ENCODE measurements at regions of chr12 and their contacts with region 1.

Region 1: DNA sequence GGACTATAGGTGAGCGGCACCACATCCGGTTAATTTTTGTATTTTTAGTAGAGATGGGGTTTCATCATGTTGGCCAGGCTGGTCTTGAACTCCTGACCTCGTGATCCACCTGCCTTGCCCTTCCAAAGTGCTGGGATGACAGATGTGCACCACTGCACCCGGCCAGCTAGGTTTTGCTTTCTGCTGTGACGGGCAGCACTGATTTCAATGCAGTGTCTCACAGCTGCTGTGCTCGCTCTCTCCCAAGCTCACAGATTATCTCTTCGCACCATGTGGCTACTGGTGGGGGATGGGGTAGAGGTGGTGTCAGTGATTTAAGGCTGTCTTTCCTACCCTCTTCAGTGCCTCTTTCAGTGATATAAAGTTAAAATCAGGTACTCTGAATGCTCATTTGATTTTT is 909.1 kb downstream of the TRHDE start:
- DNase-seq: no peak
- H3K4me3 ChIP-seq: no peak overlapping the region
- H3K27ac ChIP-seq: no peak overlapping the region
- H3K4me1 ChIP-seq: no peaks in the 10 kb centered on the region
- CTCF ChIP-seq: no peak

Region 2: DNA sequence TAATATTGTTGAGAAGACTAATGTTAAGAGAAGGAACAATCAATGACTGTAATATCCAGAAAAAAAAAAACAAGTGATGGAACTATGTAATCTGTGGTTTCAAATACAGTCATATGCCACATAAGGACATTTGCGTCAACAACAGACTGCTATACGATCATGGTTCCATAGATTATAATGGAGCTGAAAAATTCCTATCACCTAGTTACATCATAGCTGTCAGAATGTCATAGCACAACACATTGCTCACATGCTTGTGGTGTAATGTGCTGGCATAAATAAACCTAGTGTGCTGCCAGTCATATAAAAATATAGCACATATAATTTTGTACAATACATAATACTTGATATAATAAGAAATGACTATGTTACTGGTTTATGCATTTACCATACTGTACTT is 255.5 kb before region 1 on chr12:
- CTCF ChIA-PET with region 1: no interaction called
- POLR2A ChIA-PET with region 1: no interaction called
- intact Hi-C with region 1: no loop called
- DNase-seq: no peak
- H3K4me3 ChIP-seq: no peak overlapping the region
- H3K27ac ChIP-seq: no peak overlapping the region
- H3K4me1 ChIP-seq: no peaks in the 10 kb centered on the region
- CTCF ChIP-seq: no peak

Region 3: DNA sequence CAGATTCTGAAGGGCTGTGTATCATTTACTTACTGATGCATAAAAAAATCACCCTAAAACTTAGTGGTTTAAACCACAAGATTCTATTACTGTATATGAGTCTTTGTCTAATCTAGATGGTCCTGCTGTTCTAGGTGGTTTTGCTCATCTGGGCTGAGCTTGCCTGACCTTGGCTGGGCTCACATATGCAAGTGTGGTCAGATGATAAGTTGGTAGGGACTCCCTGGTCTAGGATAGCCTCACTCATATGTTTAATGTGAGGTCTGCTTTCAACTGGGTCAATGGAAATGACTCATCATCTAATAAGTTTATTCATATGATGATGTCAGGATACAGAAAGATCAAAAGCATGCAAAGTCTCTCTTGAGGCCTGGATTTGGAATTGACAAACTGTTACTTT is 21.3 kb before region 1 on chr12:
- CTCF ChIA-PET with region 1: no interaction called
- POLR2A ChIA-PET with region 1: interaction called, 11 read pairs
- intact Hi-C with region 1: no loop called
- DNase-seq: no peak
- H3K4me3 ChIP-seq: no peak overlapping the region
- H3K27ac ChIP-seq: no peak overlapping the region
- H3K4me1 ChIP-seq: no peaks in the 10 kb centered on the region
- CTCF ChIP-seq: no peak

Measured in OCI-LY7 (cell line).